Naive thymus-derived CD4-positive, alpha-beta T cell (primary cell): ENCODE measurements at regions of chr17 and their contacts with region 1.

Region 1: GRCh38 chr17:73820686-73821448 is 176.6 kb upstream of the SDK2 start:
- DNase-seq: no peak
- ATAC-seq: no peak
- H3K4me3 ChIP-seq: no peak overlapping the region
- H3K4me3 Mint-ChIP-seq: peak overlapping the region in 1 of 10 donors; percentile 85
- H3K27ac ChIP-seq: no peak overlapping the region
- H3K27ac Mint-ChIP-seq: peak overlapping the region in 2 of 9 donors; percentile 6 to 30
- H3K4me1 ChIP-seq: peaks cover 0 to 29% of the 10 kb centered on the region in 2 donors
- H3K4me1 Mint-ChIP-seq: peaks cover 0 to 54% (median 38%) of the 10 kb centered on the region in 7 donors
- H3K27me3 ChIP-seq: no peaks in the 10 kb centered on the region
- H3K27me3 Mint-ChIP-seq: peaks cover 0 to 31% (median 0%) of the 10 kb centered on the region in 5 donors

Region 2: GRCh38 chr17:73770115-73770848 is 50.6 kb before region 1 on chr17:
- CTCF ChIA-PET with region 1: no interaction called
- POLR2A ChIA-PET with region 1: no interaction called
- intact Hi-C with region 1: loop called in 1 of 2 experiments (anchors 10 kb)
- DNase-seq: no peak
- ATAC-seq: peak; percentile 14
- H3K4me3 ChIP-seq: no peak overlapping the region
- H3K4me3 Mint-ChIP-seq: no peak overlapping the region
- H3K27ac ChIP-seq: no peak overlapping the region
- H3K27ac Mint-ChIP-seq: no peak overlapping the region
- H3K4me1 ChIP-seq: no peaks in the 10 kb centered on the region
- H3K4me1 Mint-ChIP-seq: peaks cover 0 to 5% (median 0%) of the 10 kb centered on the region in 7 donors
- H3K27me3 ChIP-seq: no peaks in the 10 kb centered on the region
- H3K27me3 Mint-ChIP-seq: no peaks in the 10 kb centered on the region

Region 3: DNA sequence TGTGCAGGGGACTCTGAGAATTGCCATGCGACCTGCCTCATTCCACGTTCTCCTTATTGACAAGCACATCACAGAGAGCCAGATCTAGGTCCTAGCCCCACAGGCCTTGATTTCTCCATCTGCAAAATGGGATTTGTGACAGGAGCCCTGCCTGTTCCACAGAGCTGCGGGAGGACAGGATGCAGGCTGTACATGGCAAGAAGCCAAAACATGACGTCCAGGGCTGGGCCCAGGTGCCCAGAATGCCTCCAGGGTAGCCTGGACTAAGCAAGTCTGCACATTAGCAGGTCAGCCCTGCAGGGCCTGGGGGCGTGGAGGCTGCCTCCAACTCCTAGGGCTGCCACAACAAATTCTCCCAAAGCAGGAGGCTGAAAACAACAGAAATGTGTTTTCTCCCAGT is 59.1 kb after region 1 on chr17:
- CTCF ChIA-PET with region 1: no interaction called
- POLR2A ChIA-PET with region 1: no interaction called
- intact Hi-C with region 1: no loop called
- DNase-seq: no peak
- ATAC-seq: no peak
- H3K4me3 ChIP-seq: no peak overlapping the region
- H3K4me3 Mint-ChIP-seq: no peak overlapping the region
- H3K27ac ChIP-seq: no peak overlapping the region
- H3K27ac Mint-ChIP-seq: no peak overlapping the region
- H3K4me1 ChIP-seq: no peaks in the 10 kb centered on the region
- H3K4me1 Mint-ChIP-seq: peaks cover 0 to 3% (median 0%) of the 10 kb centered on the region in 7 donors
- H3K27me3 ChIP-seq: no peaks in the 10 kb centered on the region
- H3K27me3 Mint-ChIP-seq: peaks cover 0 to 4% (median 0%) of the 10 kb centered on the region in 5 donors